Right ventricle myocardium inferior (tissue), 1 donor: ENCODE measurements at regions of chr19 and their contacts with region 1.

Region 1: DNA sequence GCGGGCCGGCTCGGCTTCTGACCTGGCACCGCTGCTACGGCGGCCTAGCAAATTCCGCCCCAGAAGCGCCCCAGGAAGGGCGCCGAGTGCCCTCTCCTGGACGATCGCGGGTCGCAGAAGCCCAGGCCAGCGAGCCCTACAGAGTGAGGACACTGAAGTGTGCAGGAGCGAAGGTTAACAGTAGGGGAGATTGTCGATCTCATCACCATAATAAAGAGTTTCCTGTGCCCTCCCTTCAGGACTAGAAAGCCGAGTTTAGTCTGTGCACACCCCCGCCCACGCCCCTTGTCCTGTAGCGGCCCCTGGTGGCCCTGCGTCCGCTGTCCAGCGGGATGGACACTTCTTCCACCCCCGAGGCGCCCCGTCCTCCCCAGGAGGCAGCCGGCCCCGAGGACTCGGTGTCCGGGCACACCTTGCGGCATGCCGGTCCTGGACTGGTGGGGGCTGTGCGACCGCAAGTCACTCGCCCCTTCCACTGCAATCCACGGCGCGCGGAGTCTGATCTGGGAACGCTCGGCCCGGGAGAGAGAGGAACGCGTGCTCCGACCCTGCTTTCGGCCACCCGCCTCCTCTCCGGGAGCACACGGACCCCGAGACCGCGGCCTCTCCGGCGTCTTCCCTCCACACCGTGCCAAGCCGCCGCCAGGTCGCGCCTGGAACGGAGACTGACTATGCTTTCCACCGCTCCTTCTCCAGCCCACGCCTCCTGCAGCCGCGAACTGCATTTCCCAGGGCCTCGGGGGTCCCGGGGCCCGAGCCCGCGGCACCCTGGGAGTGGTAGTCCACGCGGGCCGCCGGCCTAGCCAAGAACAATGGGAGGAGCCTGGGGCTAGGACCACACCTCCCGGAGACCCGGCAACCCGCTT is 769 bp upstream of the KMT2B start:
- DNase-seq: peak; percentile 99
- ATAC-seq: peak; percentile 96

Region 2: DNA sequence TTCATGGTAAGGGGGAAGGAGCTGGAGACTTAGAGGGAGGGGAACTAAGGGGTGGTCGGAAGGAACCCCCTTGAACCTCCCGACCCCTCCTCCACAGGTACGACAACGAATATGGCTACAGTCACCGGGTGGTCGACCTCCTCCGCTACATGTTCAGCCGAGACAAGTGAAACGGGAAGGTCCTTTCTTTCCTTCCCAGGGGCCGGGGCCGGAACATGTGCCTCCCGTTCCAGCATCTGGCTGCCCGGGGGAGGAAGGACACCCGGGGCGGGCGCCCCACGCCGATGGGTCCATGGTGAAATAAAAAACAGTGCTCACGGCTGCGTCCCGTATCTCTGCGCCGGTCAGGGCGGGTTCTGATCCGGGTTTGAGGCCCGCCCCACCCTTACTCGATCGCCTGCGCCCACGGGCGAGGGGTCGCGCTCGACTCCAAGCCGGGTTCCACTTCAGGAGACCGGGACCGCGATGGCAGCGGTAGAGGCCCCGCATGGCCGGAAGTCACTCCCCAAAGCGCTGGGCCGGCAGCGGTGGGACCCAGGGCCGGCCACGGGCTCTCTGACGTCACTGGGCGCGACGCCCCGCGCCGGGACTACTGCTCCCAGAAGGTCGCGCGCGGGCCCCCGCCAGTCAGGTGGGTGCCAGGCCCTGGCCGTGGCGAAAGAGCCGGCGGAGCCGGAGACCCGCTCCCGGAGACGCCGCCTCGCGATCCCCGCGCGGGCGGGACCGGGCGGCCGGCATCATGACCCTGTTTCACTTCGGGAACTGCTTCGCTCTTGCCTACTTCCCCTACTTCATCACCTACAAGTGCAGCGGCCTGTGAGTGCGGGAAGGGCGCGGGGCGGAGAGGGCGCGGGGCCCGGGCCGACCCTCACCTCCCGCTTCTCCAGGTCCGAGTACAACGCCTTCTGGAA is 171.8 kb before region 1 on chr19 and contains the start of gene TMEM147:
- intact Hi-C with region 1: loop called (anchors 1 kb)
- DNase-seq: peak; percentile 98
- ATAC-seq: peak; percentile 98
- total RNA-seq, gene TMEM147: 84.6 TPM

Region 3: GRCh38 chr19:35673121-35673804 is 43.8 kb before region 1 on chr19:
- intact Hi-C with region 1: no loop called
- DNase-seq: no peak
- ATAC-seq: peak; percentile 68

Region 4: DNA sequence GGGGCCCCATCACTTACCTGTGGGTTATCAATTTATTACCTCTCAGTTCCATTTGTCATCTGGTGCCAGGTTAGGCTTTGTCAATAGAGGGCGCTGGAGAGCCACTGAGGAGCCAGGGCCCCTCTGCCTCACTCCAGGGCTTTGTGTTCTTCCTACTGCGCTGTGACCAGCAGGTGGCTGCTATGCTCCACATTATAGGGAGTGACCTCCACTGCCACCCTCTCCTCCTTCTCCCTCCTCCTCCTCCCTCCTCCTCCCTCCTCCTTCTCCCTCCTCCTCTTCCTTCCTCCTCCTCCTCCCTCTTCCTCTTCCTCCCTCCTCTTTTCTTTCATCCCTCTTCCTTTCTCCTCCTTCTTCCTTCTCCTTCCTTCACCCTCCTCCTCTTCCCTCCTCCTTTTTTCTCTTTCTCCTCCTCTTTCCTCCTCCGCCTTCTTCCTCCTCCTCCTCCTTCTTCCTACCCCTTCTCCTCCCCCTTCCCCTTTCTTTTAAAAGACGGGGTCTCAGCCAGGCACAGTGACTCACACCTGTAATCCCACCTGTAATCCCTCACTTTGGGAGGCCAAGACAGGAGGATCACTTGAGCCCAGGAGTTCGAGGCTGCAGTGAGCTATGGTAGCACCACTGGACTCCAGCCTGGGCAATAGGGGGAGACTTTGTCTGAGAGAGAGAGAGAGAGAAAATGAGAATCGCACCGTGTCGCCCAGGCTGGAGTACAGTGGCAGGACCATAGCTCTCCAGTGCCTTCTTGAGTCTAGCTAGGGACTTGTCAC is 23.0 kb before region 1 on chr19:
- intact Hi-C with region 1: loop called (anchors 1 kb)
- DNase-seq: peak; percentile 89
- ATAC-seq: peak; percentile 99

Region 5: GRCh38 chr19:35702223-35703012 is 14.6 kb before region 1 on chr19:
- intact Hi-C with region 1: loop called (anchors 1 kb)
- DNase-seq: peak; percentile 97
- ATAC-seq: peak; percentile 99

Region 6: DNA sequence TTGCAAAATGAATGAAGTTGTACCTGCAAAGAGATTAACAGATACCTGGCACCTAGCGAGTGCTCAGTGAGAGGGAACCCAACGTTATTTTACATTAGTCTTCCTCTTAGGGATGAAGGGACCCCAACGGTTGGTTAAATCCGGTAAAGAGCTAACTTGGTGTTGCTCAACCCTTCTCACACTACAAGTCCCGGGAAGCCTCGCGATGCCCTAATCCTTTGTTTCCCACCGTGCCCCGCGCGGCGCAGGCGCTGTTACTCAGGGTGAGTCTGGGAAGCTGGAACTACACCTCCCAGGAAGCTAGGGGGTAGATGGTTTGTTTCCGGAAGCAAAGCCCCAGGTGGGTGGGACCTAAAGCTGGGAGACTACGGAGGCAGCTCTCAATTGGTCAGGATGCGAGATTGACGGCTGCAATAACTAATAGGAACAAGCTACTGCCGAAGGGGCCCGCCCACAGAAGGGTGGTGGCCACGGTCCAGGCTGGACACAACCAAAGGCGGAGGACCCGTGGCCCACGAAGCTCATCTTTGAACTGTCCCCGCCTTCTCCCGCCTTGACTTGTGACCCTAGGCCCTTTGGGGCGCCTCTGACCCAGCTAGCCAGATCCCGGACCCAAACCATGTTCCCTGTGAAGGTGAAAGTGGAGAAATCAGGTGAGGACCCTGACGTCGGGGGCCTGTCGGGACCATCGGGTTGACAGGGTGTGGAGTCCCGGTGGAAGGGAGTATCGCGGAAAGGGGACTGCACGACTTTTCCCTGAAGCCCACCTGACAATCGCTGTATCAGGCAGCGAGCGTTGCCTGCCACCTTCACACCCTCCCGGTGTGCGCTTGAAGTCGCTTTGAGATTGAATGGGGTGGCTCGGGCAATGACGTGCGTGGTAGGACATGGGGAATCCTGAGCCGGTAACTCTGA is 31.3 kb after region 1 on chr19 and contains the start of gene LIN37:
- intact Hi-C with region 1: loop called (anchors 1 kb)
- DNase-seq: peak; percentile 100
- ATAC-seq: peak; percentile 88
- total RNA-seq, gene LIN37: 8.2 TPM

Region 7: DNA sequence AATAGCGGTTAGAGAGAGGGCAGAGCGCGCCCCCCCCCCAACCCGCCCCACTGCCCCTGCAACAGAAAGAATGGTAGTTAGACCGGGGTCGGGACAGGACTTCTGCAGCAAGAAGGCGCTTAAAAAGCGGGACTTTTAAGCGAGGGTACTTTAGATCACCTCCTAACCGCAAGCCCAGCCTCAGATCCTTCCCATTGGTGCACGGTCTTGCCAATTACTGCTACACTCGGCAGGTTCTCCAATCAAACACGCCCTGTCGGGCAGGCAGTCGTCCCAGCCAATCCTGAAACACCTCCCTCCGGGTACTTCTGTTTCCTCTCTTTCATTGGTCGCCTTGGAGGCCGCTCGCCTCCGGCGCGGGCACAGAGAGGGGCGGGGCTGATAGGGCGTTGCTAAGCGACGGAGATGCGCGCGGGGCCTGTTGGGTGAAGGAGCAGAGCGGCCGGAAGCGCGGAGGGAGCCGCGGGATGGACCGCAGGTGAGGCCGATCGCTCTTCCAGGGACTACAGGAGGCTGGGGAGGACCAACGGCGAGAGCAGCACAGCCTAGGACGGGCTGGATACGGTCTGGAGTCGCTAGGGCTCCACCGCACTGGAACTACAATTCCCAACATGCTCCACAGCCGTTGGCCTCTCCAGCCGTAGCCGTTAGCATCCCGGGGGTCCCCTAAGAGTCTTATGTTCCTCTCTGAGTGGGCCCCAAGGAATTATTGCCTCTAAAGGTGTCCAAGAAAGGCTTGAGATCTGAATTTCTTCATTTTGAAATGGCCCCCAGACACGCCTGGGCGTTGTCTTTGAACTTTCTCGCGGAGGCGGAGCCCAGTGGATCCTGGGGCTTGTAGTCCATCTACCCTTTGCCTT is 40.9 kb after region 1 on chr19 and contains the start of gene PROSER3:
- intact Hi-C with region 1: loop called (anchors 1 kb)
- DNase-seq: peak; percentile 99
- ATAC-seq: peak; percentile 79
- total RNA-seq, gene PROSER3: 5.1 TPM

Region 8: DNA sequence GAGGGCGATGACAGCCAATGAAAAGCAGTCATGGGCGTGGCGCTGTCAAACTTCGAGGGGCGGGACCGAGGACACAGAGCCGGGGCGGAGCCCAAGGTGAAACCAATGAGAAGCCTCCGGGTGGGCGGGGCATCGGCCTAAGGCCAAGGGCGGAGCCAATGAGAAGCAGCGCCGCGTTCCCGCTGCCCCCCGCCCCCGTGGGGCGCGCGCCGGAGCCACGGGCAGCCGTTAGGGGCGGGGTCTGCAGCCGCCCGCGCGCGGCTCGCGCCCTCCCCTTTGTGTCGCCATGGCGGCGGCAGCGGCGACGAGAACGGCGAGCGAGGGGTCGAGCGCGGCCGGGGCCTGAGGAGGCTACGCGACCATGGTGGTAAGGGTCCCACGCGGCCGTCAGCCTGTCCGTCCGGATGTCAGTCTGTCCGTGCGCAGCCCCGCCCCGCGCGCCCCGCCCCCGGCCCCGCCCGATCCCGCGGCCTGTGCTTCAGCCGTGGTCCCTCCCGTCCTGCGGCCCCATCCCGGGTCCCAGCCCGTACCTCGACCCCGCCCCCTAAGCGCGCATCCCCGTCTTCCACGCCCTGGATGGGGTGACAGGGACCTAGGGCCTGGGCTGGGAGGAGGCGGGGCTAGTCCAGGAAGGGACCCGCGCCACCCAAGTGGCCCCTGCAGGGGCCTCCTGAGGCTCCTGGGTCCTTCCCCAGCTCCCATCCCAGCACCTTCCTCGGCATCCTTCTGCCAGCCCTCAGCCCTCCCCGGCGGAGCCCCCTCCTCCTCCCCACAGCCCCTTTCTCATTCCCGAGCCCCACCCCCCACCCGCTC is 58.5 kb after region 1 on chr19 and contains the start of gene ARHGAP33:
- intact Hi-C with region 1: no loop called
- DNase-seq: peak; percentile 100
- ATAC-seq: peak; percentile 99
- total RNA-seq, gene ARHGAP33: 4.2 TPM

Region 9: DNA sequence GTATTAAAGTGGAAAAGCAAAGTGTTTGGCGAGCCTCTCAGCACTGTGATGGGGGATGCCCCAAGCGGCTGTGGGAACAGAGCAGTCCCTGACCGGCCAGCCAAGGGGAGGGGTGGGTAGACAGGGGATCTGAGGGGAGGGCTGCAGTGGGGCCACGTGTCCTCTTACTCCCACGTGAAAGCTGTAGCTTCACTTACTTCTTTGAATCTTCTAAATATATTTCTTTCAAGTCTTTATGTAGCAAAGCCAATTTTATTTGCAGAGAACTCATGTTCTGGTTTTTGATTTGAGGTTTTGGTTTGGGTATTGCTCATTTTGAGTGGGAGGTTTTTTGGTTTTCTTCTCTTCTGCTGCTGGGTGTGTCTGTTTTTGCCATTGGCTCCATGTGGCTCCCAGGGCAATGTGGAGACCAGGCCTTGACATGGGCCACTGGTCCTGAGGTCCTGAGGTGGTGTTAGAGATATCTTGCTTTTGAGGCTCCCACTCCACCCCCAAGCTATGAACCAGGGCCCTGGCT is 376.2 kb after region 1 on chr19:
- intact Hi-C with region 1: no loop called
- DNase-seq: no peak
- ATAC-seq: no peak